ENCODE measurements at regions of chr5 and their contacts with region 1.

Region 1: DNA sequence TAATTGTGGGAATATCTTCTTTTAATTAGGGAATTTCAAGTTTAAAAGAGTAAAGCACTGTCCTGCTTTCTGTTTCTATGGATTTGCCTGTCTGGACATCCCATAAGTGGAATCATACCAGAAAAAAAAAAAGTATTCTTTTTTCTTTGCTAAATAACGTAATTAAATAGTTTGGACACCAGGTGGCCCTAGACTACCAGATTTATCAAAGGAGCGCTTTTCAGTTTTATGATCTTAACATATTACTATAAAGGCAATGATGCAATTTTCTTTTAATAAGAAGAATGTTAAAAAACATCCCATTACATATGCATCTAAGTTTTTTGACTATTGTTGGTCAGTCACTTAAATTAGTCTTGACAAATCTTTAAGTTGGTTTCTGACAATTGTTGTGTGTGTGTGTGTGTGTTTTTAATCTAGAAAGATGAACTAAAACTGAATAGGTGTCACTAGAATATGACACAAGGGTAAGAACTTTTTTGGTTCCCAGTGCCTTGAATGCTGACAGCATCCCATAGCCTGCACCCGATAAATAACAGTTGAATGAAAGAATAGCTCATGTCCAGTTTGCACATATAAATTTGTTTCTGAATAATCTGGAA is 49.5 kb downstream of the C5orf22 start:
- DNase-seq: no peak
- ATAC-seq: no peak
- H3K4me3 Mint-ChIP-seq: no peak overlapping the region
- H3K27ac Mint-ChIP-seq: no peak overlapping the region
- H3K4me1 Mint-ChIP-seq: no peaks in the 10 kb centered on the region
- H3K27me3 Mint-ChIP-seq: peaks cover 8% of the 10 kb centered on the region
- CTCF ChIP-seq: no peak

Region 2: DNA sequence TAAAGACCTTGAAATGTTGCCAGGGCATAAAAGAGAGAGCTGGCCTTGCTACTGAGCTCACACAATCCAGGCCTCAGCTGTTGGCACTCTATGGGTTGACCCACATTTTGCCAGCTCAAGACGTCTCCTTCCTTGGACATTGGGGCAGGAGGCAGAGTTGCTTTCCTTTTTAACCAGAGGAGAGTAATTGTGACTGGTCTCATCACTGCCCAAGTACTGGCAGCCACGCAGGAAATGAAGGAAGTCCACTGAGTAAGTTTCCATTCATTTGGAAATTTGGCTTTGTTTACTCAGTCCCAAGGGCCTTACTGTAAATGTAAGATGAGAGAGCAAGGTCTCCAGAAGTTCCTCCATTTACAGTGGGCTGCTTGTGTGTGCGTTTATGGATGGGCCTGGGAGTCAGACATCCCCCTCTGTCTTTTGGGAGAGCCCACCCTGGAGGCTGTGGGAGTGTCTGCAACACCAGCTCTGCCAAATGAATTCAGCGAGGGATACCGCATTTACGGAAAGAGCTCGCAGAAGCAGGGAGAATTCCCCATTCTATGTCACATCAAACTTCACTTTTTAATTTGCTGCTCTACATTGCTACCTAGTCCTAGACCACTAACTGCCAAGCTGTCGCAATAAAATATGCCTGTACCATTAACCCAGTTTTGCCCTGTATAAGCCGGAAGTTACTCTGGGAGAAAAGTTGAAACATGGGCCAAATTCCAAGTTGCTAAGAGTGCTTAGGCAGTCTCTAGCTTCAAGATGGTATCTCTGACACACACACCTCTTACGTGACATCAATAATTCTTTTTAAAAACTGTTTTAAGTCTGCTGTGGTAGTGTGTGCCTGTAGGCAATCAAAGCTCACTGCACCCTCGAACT is 32.8 kb after region 1 on chr5:
- CTCF ChIA-PET with region 1: no interaction called
- POLR2A ChIA-PET with region 1: no interaction called
- intact Hi-C with region 1: no loop called
- DNase-seq: no peak
- ATAC-seq: no peak
- H3K4me3 Mint-ChIP-seq: no peak overlapping the region
- H3K27ac Mint-ChIP-seq: no peak overlapping the region
- H3K4me1 Mint-ChIP-seq: no peaks in the 10 kb centered on the region
- H3K27me3 Mint-ChIP-seq: peaks cover 29% of the 10 kb centered on the region
- CTCF ChIP-seq: no peak

Region 3: GRCh38 chr5:32076699-32077695 is 495.4 kb after region 1 on chr5:
- CTCF ChIA-PET with region 1: interaction called, 8 read pairs
- POLR2A ChIA-PET with region 1: no interaction called
- intact Hi-C with region 1: loop called (anchors 1 kb)
- DNase-seq: no peak
- ATAC-seq: no peak
- H3K4me3 Mint-ChIP-seq: no peak overlapping the region
- H3K27ac Mint-ChIP-seq: no peak overlapping the region
- H3K4me1 Mint-ChIP-seq: no peaks in the 10 kb centered on the region
- H3K27me3 Mint-ChIP-seq: no peaks in the 10 kb centered on the region
- CTCF ChIP-seq: no peak

Region 4: DNA sequence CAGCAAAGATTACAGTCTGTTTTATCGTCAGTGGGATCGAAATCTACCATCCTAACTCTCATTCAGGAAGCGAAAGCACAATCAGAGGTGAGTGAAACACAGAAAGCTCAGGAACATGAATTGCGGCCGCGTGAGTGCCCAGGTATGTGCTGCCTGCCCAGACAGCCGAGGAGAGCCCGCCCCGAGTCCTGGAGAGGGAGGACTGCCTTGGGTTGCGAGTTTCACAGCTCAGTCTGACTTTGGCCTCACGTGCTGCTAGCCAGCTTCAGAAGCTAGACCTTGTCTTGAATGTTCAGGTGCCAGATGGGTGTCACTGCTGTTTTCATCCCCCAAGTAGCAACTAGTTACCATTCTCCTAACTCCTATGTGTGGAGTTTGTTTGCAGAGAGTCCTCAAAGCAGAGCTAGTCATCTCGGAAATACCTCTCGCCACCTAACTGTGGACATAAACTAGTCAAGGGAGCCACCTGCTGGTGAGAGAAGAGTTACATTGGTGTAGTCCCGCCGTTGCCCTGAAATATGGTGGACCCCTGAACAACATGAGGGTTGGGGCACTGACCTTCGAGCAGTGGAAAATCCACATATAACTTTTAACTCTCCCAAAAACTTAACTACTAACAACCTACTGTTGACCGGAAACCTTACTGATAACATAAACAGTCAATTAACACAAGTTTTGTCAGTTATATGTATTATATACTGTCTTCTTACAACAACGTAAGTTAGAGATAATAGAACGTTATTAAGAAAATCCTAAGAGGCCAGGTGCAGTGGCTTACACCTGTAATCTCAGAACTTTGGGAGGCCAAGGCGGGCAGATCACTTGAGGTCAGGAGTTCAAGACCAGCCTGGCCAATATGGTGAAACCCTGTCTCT is 511.6 kb after region 1 on chr5:
- CTCF ChIA-PET with region 1: interaction called, 26 read pairs
- POLR2A ChIA-PET with region 1: no interaction called
- intact Hi-C with region 1: loop called (anchors 1 kb)
- DNase-seq: no peak
- ATAC-seq: peak; percentile 72
- H3K4me3 Mint-ChIP-seq: no peak overlapping the region
- H3K27ac Mint-ChIP-seq: no peak overlapping the region
- H3K4me1 Mint-ChIP-seq: peaks cover 6% of the 10 kb centered on the region
- H3K27me3 Mint-ChIP-seq: no peaks in the 10 kb centered on the region
- CTCF ChIP-seq: no peak

Region 5: GRCh38 chr5:32329308-32329834 is 747.8 kb after region 1 on chr5:
- CTCF ChIA-PET with region 1: no interaction called
- POLR2A ChIA-PET with region 1: no interaction called
- intact Hi-C with region 1: loop called (anchors 2 kb)
- DNase-seq: peak; percentile 21
- ATAC-seq: peak; percentile 87
- H3K4me3 Mint-ChIP-seq: no peak overlapping the region
- H3K27ac Mint-ChIP-seq: no peak overlapping the region
- H3K4me1 Mint-ChIP-seq: peaks cover 2% of the 10 kb centered on the region
- H3K27me3 Mint-ChIP-seq: no peaks in the 10 kb centered on the region
- CTCF ChIP-seq: no peak